GM10248 (cell line): ENCODE measurements at regions of chr14 and their contacts with region 1.

Region 1: GRCh38 chr14:73728717-73729330 is 14.6 kb upstream of the PNMA1 start:
- DNase-seq: peak; percentile 85
- CTCF ChIP-seq: peak; percentile 70

Region 2: DNA sequence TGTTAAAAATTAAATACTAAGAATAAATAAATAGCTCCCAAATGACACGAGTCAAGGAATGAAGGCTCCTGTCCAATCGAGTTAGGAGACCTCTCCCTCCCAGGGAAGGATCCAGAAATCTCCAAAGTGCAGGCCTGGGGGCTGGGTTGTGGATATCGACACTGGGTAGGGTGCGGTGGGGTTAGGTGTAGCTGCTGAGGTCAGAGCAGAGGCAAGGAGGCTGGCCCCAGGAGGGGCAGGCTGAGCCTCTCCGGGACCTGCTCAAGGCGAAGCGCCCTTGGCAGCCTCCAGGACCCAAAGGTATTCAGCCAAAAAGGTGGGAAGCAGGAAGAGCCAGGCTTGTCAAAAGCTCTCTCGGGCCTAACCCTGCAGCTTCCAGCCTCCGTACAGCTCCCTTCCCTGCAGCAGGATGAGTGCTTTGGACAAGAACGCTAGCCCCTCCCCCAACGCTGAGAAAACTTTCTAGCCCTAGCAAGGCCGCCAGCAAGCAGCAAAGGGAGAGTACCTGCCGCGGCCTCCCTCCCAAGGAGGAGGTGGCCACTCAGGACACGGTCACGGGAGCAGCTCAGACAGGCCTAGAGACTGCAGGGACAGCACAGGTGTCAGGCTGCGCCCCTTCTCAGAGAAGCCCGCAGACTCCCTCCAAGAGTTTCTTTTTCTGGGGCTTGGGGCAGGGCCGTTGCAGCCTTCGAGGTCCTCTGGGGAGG is 11.0 kb before region 1 on chr14:
- CTCF ChIA-PET with region 1: interaction called, 25 read pairs
- POLR2A ChIA-PET with region 1: interaction called, 8 read pairs
- DNase-seq: no peak
- CTCF ChIP-seq: no peak

Region 3: DNA sequence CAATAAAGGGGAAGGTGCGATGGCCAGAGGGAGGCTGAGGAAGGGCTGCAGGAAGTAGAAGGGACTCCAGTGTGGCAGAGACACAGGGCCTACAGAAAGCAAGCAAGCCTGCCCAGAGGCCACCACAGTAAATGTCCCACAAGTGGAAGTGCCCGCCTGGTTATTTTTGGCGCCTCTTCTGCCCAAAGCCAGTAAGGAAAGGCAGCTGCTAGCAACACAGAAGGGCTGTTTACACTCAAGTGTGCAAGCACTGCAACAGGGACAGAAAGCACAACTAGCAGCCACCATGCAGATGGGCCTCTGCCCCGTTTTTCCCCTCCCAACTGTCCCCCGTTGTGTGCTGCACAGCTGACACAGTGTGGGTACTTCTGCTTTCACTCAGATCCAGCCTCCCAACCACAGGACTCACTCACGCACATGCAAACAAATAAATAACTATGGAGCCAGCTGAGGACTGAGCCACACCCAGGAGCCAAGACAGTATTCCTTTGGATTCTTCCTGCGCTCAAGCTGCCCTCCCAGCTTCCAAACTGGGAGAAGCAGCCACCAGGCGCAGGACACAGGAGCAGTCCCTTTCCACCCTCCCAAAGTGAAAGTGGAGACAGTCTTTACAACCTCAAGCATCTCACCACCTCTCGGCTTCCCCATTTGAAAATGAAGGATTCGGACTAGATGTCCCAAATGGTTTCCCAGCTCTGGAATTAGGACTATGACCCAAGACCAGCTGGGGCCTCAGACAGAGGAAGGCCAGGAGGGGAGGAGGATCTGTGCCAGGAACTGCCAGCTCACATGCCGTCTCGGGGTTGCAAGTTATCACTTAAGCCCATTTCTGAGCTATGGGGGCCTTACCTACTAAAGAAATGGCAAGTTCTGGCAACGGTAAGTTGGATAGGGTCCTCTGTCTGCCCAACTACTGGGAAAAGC is 25.4 kb after region 1 on chr14:
- CTCF ChIA-PET with region 1: interaction called, 30 read pairs
- POLR2A ChIA-PET with region 1: no interaction called
- DNase-seq: peak; percentile 73
- CTCF ChIP-seq: no peak

Region 4: GRCh38 chr14:73771848-73772638 is 43.2 kb after region 1 on chr14:
- CTCF ChIA-PET with region 1: interaction called, 12 read pairs
- POLR2A ChIA-PET with region 1: no interaction called
- DNase-seq: peak; percentile 78
- CTCF ChIP-seq: no peak

Region 5: GRCh38 chr14:73825551-73826188 is 96.8 kb after region 1 on chr14:
- CTCF ChIA-PET with region 1: interaction called, 135 read pairs
- POLR2A ChIA-PET with region 1: no interaction called
- DNase-seq: peak; percentile 84
- CTCF ChIP-seq: peak; percentile 86

Region 6: DNA sequence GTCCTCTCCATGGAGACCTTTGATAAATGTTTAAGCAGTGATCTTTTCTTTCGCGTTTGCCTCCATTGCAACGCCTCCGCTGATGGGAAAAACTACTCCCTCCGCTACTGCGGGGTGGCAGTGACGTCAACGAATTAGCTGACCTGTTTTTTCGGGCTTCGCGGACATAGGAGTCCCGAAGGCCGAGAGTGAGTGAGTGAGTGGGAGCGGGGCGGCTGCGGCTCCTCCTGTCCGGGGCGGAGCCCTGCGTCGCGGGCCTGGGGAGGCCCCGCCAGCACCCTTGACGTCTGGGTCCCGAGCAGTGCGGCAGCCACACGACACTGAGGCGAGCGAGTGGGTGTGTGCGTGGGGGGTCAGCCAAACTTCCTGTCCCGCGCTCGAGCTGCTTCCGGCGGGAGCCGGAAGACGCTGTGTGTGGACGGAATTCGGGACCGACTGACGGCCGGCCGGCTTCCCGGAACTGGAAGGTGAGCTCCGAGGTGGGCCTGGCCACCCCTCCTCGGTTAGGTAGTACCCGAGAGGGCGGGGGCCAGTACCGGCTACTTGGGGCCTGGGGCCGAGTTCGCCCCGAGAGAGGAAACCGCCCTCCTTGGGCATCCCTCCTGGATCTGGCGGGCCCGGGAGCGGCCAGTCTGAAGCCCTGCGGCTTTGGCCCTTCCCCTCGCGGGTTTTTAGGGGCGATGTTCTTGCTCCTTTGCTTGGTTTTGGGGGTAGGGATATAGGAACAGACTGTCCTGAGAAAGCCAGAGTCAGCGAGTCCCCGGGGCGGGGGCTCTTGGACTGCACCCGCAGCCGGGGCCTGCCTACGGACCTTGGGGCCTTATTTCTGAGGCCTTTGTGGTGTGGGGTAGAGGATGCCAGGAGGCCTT is 157.9 kb after region 1 on chr14 and contains the start of gene ZNF410:
- CTCF ChIA-PET with region 1: interaction called, 10 read pairs
- POLR2A ChIA-PET with region 1: no interaction called
- DNase-seq: peak; percentile 95
- CTCF ChIP-seq: no peak